Heart right ventricle (tissue), 16 donors: ENCODE measurements at regions of chr12 and their contacts with region 1.

Region 1: DNA sequence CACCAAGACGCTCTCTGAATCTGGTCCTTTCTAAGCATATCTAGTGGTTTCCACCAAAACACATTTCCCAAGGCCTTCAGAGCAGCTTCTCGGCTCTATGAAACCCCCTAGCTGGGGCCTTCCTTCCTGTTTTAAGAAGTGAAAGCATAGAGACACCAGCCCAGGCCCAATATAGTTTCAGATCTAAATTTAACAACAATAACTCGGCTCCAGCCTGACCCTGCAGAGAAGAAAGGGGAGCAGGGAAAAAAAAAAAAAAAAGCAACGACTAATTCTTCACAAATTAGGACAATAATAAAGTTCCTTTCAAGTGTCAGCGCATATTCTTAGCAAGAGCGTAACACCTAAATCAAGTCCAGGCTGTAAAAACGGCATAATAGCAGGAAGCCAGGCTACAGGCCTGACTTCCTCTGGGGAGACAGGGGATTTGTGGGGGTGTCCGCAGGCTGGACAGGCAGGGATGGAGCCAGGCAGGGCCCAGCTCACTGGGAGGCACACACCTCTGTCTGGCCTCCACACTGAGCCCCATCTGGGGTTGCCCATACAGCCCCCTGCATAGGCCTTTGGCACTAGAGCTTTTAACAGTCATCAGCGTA is 773.1 kb downstream of the MED13L start:
- DNase-seq: peak; percentile 19 to 55
- ATAC-seq: peak; percentile 65 to 91 (median 82)
- H3K4me3 ChIP-seq: no peak overlapping the region
- H3K27ac ChIP-seq: peak overlapping the region; percentile 16 to 82 (median 74)
- H3K4me1 ChIP-seq: peaks cover 0 to 57% (median 17%) of the 10 kb centered on the region in 9 donors
- H3K27me3 ChIP-seq: no peaks in the 10 kb centered on the region
- CTCF ChIP-seq: no peak

Region 2: GRCh38 chr12:114598111-114598510 is 906.3 kb before region 1 on chr12:
- intact Hi-C with region 1: no loop called
- DNase-seq: no peak
- ATAC-seq: no peak
- H3K4me3 ChIP-seq: no peak overlapping the region
- H3K27ac ChIP-seq: no peak overlapping the region
- H3K4me1 ChIP-seq: no peaks in the 10 kb centered on the region
- H3K27me3 ChIP-seq: no peaks in the 10 kb centered on the region
- CTCF ChIP-seq: no peak

Region 3: GRCh38 chr12:114662512-114663177 is 841.8 kb before region 1 on chr12:
- intact Hi-C with region 1: loop called in 1 of 10 experiments (anchors 10 kb)
- DNase-seq: peak; percentile 72 to 73
- ATAC-seq: peak in 3 of 8 donors; percentile 46 to 50 (median 49)
- H3K4me3 ChIP-seq: no peak overlapping the region
- H3K27ac ChIP-seq: no peak overlapping the region
- H3K4me1 ChIP-seq: peaks cover 0 to 19% (median 13%) of the 10 kb centered on the region in 9 donors
- H3K27me3 ChIP-seq: peaks cover 6 to 78% (median 61%) of the 10 kb centered on the region in 7 donors
- CTCF ChIP-seq: peak in 8 of 9 donors; percentile 87 to 99 (median 96)

Region 4: GRCh38 chr12:115383669-115384068 is 120.7 kb before region 1 on chr12:
- intact Hi-C with region 1: no loop called
- DNase-seq: no peak
- ATAC-seq: peak in 1 of 8 donors; percentile 55
- H3K4me3 ChIP-seq: no peak overlapping the region
- H3K27ac ChIP-seq: no peak overlapping the region
- H3K4me1 ChIP-seq: no peaks in the 10 kb centered on the region
- H3K27me3 ChIP-seq: peaks cover 0 to 25% (median 12%) of the 10 kb centered on the region in 7 donors
- CTCF ChIP-seq: no peak

Region 5: DNA sequence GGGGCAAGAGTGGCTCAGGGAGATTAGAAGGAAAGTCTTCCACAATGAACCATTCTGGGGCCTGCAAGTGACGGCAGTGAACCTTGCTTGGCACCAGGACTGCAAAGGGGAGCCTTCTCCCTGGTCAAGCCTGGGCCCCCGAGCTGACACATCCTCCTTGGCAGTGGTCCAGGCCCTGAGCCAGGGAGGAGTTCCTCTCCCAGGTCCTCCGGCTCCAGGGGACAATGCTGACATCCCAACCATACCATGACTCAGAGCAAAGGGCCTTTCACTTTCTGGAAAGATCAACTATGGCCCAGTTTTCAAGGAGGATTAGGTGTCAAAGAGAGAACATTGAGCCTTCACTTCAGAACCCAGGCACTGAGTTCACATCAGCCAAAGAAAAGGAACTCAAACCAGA is 64.0 kb before region 1 on chr12:
- intact Hi-C with region 1: loop called in 2 of 10 experiments (anchors 1 to 5 kb)
- DNase-seq: peak; percentile 64 to 65
- ATAC-seq: peak; percentile 25 to 74 (median 55)
- H3K4me3 ChIP-seq: no peak overlapping the region
- H3K27ac ChIP-seq: peak overlapping the region in 6 of 10 donors; percentile 50 to 78 (median 61)
- H3K4me1 ChIP-seq: peaks cover 0 to 47% (median 8%) of the 10 kb centered on the region in 9 donors
- H3K27me3 ChIP-seq: peaks cover 0 to 5% (median 0%) of the 10 kb centered on the region in 7 donors
- CTCF ChIP-seq: no peak

Region 6: DNA sequence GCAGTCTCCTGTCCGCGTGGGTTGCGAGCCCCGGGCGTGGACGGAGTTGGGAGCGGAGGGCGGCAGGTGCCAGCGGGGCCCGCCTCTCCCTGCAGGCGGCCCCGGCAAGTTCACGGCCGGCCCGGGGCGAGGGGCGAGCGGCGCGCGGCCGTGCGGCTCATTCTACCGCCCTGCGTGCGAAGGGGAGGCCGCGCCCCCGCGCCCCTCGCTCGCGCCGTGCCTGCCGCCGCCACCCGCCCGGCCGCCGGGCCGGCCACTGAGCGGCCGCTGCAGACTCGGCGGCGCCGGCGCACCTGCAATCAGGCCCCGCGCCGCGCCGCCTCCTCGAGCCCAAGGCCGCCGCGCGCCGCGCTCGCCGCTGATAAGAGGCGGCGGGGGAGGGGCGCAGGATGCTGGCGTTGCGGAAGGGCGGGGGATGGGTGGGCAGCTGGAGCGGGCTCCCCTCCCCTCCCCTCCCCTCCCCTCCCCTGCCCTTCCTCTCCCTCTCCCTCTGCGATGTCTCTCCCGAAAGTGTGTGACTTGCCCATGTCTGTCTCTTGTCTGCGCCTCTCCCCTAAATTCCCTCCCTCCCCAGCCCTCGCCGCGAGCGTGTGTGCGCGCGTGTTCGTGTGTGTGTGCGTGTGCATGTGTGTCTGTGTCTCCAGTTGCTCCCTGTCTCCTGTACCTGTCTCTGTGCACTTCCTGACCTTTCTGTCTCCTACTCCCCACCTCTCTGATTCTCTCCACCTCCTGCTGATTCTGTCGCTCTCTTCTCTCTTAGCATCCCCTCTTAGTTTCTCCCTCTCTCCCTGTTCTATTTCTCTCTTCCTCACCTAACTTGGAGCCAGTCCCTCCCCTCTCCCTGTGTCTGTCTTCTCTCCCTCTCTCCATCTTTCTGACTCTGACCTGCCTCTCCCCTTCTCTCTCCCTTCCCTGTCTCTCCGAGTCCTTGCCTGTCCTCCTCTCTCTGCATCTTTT is 52.3 kb before region 1 on chr12:
- intact Hi-C with region 1: loop called in 1 of 10 experiments (anchors 1 kb)
- DNase-seq: peak; percentile 63 to 67
- ATAC-seq: peak; percentile 66 to 85 (median 74)
- H3K4me3 ChIP-seq: peak overlapping the region in 9 of 10 donors; percentile 24 to 53 (median 39)
- H3K27ac ChIP-seq: peak overlapping the region in 7 of 10 donors; percentile 51 to 81 (median 72)
- H3K4me1 ChIP-seq: peaks cover 0 to 24% (median 4%) of the 10 kb centered on the region in 9 donors
- H3K27me3 ChIP-seq: peaks cover 0 to 29% (median 0%) of the 10 kb centered on the region in 7 donors
- CTCF ChIP-seq: no peak

Region 7: GRCh38 chr12:115598871-115599811 is 94.7 kb after region 1 on chr12:
- intact Hi-C with region 1: loop called in 1 of 10 experiments (anchors 2 kb)
- DNase-seq: peak; percentile 44 to 54
- ATAC-seq: peak; percentile 62 to 88 (median 86)
- H3K4me3 ChIP-seq: peak overlapping the region in 5 of 10 donors; percentile 3 to 29 (median 19)
- H3K27ac ChIP-seq: peak overlapping the region in 8 of 10 donors; percentile 19 to 75 (median 54)
- H3K4me1 ChIP-seq: peaks cover 0 to 25% (median 10%) of the 10 kb centered on the region in 9 donors
- H3K27me3 ChIP-seq: peaks cover 0 to 71% (median 31%) of the 10 kb centered on the region in 7 donors
- CTCF ChIP-seq: no peak

Region 8: GRCh38 chr12:115623764-115624334 is 119.4 kb after region 1 on chr12:
- intact Hi-C with region 1: loop called in 3 of 10 experiments (anchors 5 to 10 kb)
- DNase-seq: peak; percentile 77 to 87
- ATAC-seq: peak; percentile 91 to 96 (median 94)
- H3K4me3 ChIP-seq: no peak overlapping the region
- H3K27ac ChIP-seq: peak overlapping the region in 7 of 10 donors; percentile 53 to 74 (median 66)
- H3K4me1 ChIP-seq: peaks cover 0 to 21% (median 5%) of the 10 kb centered on the region in 9 donors
- H3K27me3 ChIP-seq: peaks cover 0 to 9% (median 6%) of the 10 kb centered on the region in 7 donors
- CTCF ChIP-seq: no peak